CD4-positive, alpha-beta memory T cell (primary cell): ENCODE measurements at regions of chr5 and their contacts with region 1.

Region 1: GRCh38 chr5:173057062-173057924 is 1.1 kb downstream of the CREBRF start:
- DNase-seq: peak; percentile 97 to 99 (median 98)
- H3K4me3 ChIP-seq: peak overlapping the region; percentile 68 to 71
- H3K4me3 Mint-ChIP-seq: peak overlapping the region; percentile 92 to 98 (median 95)
- H3K27ac ChIP-seq: peak overlapping the region; percentile 95
- H3K27ac Mint-ChIP-seq: peak overlapping the region; percentile 90 to 96 (median 96)
- H3K4me1 ChIP-seq: peaks cover 50% of the 10 kb centered on the region
- H3K4me1 Mint-ChIP-seq: peaks cover 26 to 68% (median 47%) of the 10 kb centered on the region in 4 donors
- H3K27me3 ChIP-seq: no peaks in the 10 kb centered on the region
- H3K27me3 Mint-ChIP-seq: no peaks in the 10 kb centered on the region

Region 2: DNA sequence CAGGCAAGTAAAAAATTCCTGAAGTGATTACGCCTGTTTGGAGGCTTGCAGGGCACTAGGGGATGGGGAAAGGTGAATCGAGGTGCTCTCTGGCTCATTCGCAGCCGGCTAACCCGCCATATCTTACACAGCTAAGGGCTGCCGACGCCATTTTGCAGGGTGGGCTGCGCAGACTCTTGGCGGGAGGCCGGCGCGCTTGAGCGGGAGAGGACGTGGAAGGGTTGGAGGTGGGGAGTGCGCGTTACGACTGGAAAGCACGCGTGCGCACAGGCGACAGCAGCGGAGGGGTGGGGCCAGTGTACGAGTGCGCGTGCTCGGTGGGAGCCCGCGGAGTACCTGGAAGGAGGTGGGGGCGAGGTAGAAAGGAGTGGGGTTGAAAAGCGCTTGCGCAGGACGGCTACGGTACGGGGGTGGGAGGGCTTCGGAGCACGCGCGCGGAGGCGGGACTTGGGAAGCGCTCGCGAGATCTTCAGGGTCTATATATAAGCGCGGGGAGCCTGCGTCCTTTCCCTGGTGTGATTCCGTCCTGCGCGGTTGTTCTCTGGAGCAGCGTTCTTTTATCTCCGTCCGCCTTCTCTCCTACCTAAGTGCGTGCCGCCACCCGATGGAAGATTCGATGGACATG is 1669.8 kb before region 1 on chr5 and contains the start of gene NPM1:
- CTCF ChIA-PET with region 1: no interaction called
- POLR2A ChIA-PET with region 1: no interaction called
- intact Hi-C with region 1: loop called (anchors 10 kb)
- DNase-seq: peak; percentile 97 to 99 (median 99)
- H3K4me3 ChIP-seq: peak within 1 kb of the TSS; percentile 74 to 94
- H3K4me3 Mint-ChIP-seq: peak within 1 kb of the TSS; percentile 97 to 99 (median 98)
- H3K27ac ChIP-seq: peak within 1 kb of the TSS; percentile 79
- H3K27ac Mint-ChIP-seq: peak within 1 kb of the TSS; percentile 95 to 100 (median 99)
- H3K4me1 ChIP-seq: peaks cover 45% of the 10 kb centered on the region
- H3K4me1 Mint-ChIP-seq: peaks cover 29 to 58% (median 43%) of the 10 kb centered on the region in 4 donors
- H3K27me3 ChIP-seq: no peaks in the 10 kb centered on the region
- H3K27me3 Mint-ChIP-seq: peaks cover 0 to 3% of the 10 kb centered on the region in 2 donors
- total RNA-seq, gene NPM1: 857 to 892 TPM

Region 3: DNA sequence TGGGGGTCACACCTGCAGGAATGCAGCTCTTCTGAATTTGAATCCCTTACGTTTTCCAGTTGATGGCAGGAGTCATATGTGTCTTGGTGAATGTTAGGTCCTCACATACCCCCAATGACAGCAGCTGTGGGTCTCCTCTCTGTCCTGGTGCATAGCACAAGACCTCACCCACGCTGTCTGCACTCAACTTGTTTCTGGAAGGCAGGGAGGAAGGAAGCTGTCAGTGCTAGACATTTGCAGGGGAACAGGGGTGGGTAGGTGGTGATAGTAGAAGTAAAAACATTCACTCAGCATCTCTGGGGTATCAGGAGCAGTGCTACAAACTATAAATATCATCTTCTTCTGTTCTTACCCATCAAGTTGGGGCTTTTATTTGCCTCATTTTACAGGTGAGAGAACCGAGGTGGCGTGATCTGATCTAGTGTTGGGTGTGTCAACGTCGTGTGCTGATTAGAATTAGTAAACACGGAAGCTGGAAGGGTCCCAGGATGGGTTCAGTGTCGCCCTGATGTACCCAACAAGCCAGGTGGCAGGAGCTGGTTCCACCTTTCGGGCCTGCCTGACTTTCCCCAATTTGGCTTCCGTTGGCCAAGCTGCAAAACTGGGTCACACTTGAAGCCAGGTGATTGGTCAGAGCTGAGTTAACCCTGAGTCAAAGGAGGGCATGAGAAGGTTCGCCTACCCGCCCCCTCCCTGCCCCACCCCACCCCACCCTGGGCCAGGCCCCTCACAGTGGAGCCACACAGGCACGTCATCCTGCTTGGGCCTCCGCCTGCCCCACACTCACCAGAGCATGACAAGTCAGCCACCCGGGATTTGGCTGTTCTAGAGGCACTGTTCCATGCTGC is 207.5 kb before region 1 on chr5:
- CTCF ChIA-PET with region 1: no interaction called
- POLR2A ChIA-PET with region 1: no interaction called
- intact Hi-C with region 1: no loop called
- DNase-seq: no peak
- H3K4me3 ChIP-seq: no peak overlapping the region
- H3K4me3 Mint-ChIP-seq: no peak overlapping the region
- H3K27ac ChIP-seq: no peak overlapping the region
- H3K27ac Mint-ChIP-seq: peak overlapping the region in 5 of 7 donors; percentile 32 to 77 (median 50)
- H3K4me1 ChIP-seq: peaks cover 13% of the 10 kb centered on the region
- H3K4me1 Mint-ChIP-seq: peaks cover 28 to 61% (median 43%) of the 10 kb centered on the region in 4 donors
- H3K27me3 ChIP-seq: no peaks in the 10 kb centered on the region
- H3K27me3 Mint-ChIP-seq: no peaks in the 10 kb centered on the region

Region 4: DNA sequence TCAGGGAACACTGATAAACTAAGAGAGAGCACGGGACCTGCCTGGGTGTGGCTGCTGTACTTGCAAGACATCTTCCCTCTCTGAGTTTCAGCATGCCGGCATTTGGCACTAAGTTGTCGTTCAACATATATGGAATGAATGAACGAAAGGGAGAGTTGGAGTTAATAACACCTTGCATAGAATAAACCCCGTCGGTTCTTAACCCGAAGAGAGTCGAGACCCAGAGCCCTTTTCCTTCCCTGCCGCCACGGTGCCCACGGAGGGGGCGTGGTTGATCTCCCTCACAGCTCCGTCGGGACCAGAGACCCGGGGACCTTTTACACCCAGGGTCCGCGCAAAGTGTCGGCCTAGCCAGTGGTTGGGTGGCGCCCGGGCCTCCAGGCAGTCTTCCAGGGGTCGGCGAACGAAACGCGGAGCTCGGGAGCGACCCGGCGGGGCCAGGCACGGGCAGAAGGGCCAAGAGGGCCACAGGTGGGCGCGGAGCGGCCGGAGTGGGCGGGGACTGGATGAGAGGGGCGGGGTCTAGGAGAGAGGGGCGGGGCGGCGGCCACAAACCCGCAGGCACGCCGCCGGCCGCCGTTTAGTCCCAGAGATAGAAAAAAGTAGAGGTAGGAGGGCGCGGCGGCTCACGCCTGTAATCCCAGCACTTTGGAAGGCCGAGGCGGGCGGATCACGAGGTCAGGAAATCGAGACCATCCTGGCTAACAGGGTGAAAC is 98.8 kb before region 1 on chr5:
- CTCF ChIA-PET with region 1: interaction called, 4 read pairs
- POLR2A ChIA-PET with region 1: interaction called, 10 read pairs
- intact Hi-C with region 1: loop called (anchors 1 kb)
- DNase-seq: peak; percentile 62 to 70 (median 67)
- H3K4me3 ChIP-seq: peak overlapping the region in 1 of 2 donors; percentile 97
- H3K4me3 Mint-ChIP-seq: peak overlapping the region; percentile 86 to 98 (median 96)
- H3K27ac ChIP-seq: peak overlapping the region; percentile 82
- H3K27ac Mint-ChIP-seq: peak overlapping the region; percentile 92 to 99 (median 98)
- H3K4me1 ChIP-seq: peaks cover 16% of the 10 kb centered on the region
- H3K4me1 Mint-ChIP-seq: peaks cover 18 to 43% (median 27%) of the 10 kb centered on the region in 4 donors
- H3K27me3 ChIP-seq: no peaks in the 10 kb centered on the region
- H3K27me3 Mint-ChIP-seq: no peaks in the 10 kb centered on the region

Region 5: GRCh38 chr5:173035904-173036707 is 21.2 kb before region 1 on chr5:
- CTCF ChIA-PET with region 1: interaction called, 7 read pairs
- POLR2A ChIA-PET with region 1: interaction called, 30 read pairs
- intact Hi-C with region 1: loop called (anchors 1 kb)
- DNase-seq: peak in 1 of 5 donors; percentile 40
- H3K4me3 ChIP-seq: peak overlapping the region; percentile 44 to 47
- H3K4me3 Mint-ChIP-seq: peak overlapping the region; percentile 80 to 95 (median 86)
- H3K27ac ChIP-seq: peak overlapping the region; percentile 71
- H3K27ac Mint-ChIP-seq: peak overlapping the region; percentile 90 to 97 (median 95)
- H3K4me1 ChIP-seq: peaks cover 46% of the 10 kb centered on the region
- H3K4me1 Mint-ChIP-seq: peaks cover 39 to 64% (median 54%) of the 10 kb centered on the region in 4 donors
- H3K27me3 ChIP-seq: no peaks in the 10 kb centered on the region
- H3K27me3 Mint-ChIP-seq: no peaks in the 10 kb centered on the region

Region 6: DNA sequence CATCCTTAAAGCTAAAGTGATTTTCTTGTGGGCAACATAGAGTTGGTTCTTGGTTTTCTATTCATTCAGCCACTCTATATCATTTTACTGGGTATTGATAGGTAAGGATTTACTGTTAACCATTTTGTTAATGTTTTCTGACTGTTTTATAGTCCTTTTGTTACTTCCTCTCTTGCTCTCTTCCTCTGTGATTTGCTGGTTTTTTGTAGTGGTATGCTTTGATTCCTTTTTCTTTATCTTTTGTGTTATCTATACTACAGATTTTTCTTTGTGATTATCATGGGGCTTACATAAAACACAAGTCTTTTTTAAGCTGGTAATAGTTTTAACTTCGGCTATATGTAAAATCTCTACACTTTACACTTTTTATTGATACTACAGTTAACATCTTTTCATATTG is 42.2 kb after region 1 on chr5:
- CTCF ChIA-PET with region 1: no interaction called
- POLR2A ChIA-PET with region 1: interaction called, 3 read pairs
- intact Hi-C with region 1: loop called (anchors 2 kb)
- DNase-seq: peak in 4 of 5 donors; percentile 17 to 34 (median 20)
- H3K4me3 ChIP-seq: no peak overlapping the region
- H3K4me3 Mint-ChIP-seq: peak overlapping the region in 6 of 8 donors; percentile 1 to 64 (median 6)
- H3K27ac ChIP-seq: no peak overlapping the region
- H3K27ac Mint-ChIP-seq: peak overlapping the region in 6 of 7 donors; percentile 1 to 37 (median 10)
- H3K4me1 ChIP-seq: peaks cover 21% of the 10 kb centered on the region
- H3K4me1 Mint-ChIP-seq: peaks cover 38 to 72% (median 54%) of the 10 kb centered on the region in 4 donors
- H3K27me3 ChIP-seq: no peaks in the 10 kb centered on the region
- H3K27me3 Mint-ChIP-seq: no peaks in the 10 kb centered on the region

Region 7: DNA sequence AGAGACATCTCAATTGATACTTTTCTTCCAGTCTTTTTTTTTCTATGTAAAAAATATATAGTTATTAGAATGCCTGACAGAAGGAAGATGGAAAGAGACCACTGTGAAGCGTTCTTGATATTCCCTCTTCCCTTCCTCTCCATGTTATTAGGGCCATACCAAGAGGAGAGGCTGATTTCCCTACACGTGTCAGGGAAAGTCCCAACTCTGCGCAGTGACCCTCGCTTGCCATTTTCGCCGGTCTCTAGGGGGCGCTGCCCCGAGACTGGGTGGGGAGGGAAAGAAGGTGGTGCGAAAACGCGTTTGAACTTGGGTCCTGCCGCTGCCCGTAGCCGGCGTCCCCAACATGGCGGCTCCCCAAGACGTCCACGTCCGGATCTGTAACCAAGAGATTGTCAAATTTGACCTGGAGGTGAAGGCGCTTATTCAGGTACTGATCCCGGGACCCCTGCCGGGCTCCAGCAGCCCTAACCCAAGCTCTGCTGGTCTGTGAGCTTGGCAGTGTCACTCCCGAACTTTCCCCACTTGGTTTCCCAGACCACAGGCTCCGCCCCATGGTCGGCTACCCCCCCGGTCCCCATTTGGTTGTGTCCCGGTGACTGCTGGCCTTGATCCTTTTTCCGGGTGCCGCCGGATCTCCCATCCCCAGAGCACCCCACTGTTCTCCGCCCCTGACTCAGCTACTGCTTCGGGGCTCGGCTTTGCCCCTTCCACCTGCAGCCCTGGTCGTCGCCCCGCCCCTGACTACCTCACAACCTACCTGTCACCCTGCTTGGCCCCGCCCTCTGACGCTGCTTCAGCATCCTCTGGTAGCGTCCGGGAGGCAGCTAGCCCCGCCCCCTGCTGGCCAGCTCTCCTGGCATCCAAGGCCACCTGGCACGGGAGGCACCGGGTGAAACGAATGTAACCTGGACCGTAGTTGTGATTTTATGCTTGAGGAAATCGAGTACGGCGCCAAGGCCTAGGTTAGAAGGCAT is 87.2 kb after region 1 on chr5 and contains the start of gene BNIP1:
- CTCF ChIA-PET with region 1: interaction called, 7 read pairs
- POLR2A ChIA-PET with region 1: interaction called, 16 read pairs
- intact Hi-C with region 1: loop called (anchors 1 kb)
- DNase-seq: peak; percentile 95 to 98 (median 95)
- H3K4me3 ChIP-seq: peak within 1 kb of the TSS; percentile 80 to 100
- H3K4me3 Mint-ChIP-seq: peak within 1 kb of the TSS; percentile 97 to 99 (median 98)
- H3K27ac ChIP-seq: peak within 1 kb of the TSS; percentile 94
- H3K27ac Mint-ChIP-seq: peak within 1 kb of the TSS; percentile 99 to 100 (median 99)
- H3K4me1 ChIP-seq: peaks cover 9% of the 10 kb centered on the region
- H3K4me1 Mint-ChIP-seq: peaks cover 8 to 19% (median 11%) of the 10 kb centered on the region in 4 donors
- H3K27me3 ChIP-seq: no peaks in the 10 kb centered on the region
- H3K27me3 Mint-ChIP-seq: no peaks in the 10 kb centered on the region
- total RNA-seq, gene BNIP1: 7.1 to 7.7 TPM

Region 8: GRCh38 chr5:173451031-173451430 is 393.7 kb after region 1 on chr5:
- CTCF ChIA-PET with region 1: no interaction called
- POLR2A ChIA-PET with region 1: no interaction called
- intact Hi-C with region 1: no loop called
- DNase-seq: no peak
- H3K4me3 ChIP-seq: no peak overlapping the region
- H3K4me3 Mint-ChIP-seq: no peak overlapping the region
- H3K27ac ChIP-seq: no peak overlapping the region
- H3K27ac Mint-ChIP-seq: no peak overlapping the region
- H3K4me1 ChIP-seq: no peaks in the 10 kb centered on the region
- H3K4me1 Mint-ChIP-seq: no peaks in the 10 kb centered on the region
- H3K27me3 ChIP-seq: no peaks in the 10 kb centered on the region
- H3K27me3 Mint-ChIP-seq: no peaks in the 10 kb centered on the region